Mammary epithelial cell (primary cell): ENCODE measurements at regions of chr10 and their contacts with region 1.

Region 1: DNA sequence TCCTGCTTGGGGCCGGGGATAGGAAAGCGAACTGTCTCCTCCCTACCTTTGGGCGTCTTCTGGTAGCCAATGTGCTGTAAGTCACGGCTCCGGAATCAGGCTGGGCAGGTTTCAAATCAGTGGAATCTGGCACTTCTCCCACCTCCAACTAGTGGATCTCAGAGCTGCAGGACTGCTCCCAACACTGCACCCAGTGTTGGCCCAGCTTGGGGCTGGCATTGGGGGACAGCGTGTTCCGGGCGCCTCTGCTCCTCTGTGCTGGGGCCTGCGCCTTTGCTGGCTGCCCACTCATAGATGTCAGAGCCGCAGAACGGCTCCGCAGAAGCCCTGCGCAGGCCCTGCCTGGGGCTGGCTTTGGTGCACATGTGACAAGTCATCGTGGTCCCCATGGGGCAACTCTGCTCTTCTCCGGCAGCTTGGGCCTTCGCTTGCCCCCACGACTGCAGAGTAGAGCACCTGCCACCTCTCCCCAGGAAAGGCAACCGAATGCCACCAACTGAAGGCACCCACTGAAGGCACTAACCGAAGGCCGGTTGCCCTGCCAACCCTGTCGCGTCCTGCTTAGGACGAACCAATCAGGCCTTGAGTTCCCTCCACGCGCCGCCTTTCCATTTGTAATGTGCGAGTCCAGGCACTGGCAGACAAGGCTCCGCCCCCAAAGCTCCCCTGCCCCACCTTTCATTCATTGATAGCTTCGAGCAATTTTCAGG is 85.5 kb upstream of the ABI1 start:
- DNase-seq: peak; percentile 70
- H3K4me3 ChIP-seq: no peak overlapping the region
- H3K27ac ChIP-seq: no peak overlapping the region
- H3K4me1 ChIP-seq: peaks cover 6% of the 10 kb centered on the region
- H3K27me3 ChIP-seq: no peaks in the 10 kb centered on the region
- CTCF ChIP-seq: no peak

Region 2: GRCh38 chr10:26593896-26594295 is 352.4 kb before region 1 on chr10:
- CTCF ChIA-PET with region 1: no interaction called
- dilution Hi-C with region 1: no loop called
- in situ Hi-C with region 1: no loop called
- intact Hi-C with region 1: no loop called
- DNase-seq: no peak
- H3K4me3 ChIP-seq: no peak overlapping the region
- H3K27ac ChIP-seq: no peak overlapping the region
- H3K4me1 ChIP-seq: no peaks in the 10 kb centered on the region
- H3K27me3 ChIP-seq: no peaks in the 10 kb centered on the region
- CTCF ChIP-seq: no peak

Region 3: GRCh38 chr10:27052646-27053045 is 106.4 kb after region 1 on chr10:
- CTCF ChIA-PET with region 1: interaction called, 10 read pairs
- dilution Hi-C with region 1: no loop called
- in situ Hi-C with region 1: no loop called
- intact Hi-C with region 1: no loop called
- DNase-seq: no peak
- H3K4me3 ChIP-seq: no peak overlapping the region
- H3K27ac ChIP-seq: no peak overlapping the region
- H3K4me1 ChIP-seq: no peaks in the 10 kb centered on the region
- H3K27me3 ChIP-seq: no peaks in the 10 kb centered on the region
- CTCF ChIP-seq: no peak